Aorta (tissue), 5 donors: ENCODE measurements at regions of chr7 and their contacts with region 1.

Region 1: GRCh38 chr7:21507626-21508343 is 35.1 kb upstream of the DNAH11 start:
- DNase-seq: no peak
- ATAC-seq: no peak
- H3K4me3 ChIP-seq: no peak overlapping the region
- H3K27ac ChIP-seq: no peak overlapping the region
- H3K4me1 ChIP-seq: no peaks in the 10 kb centered on the region
- H3K27me3 ChIP-seq: no peaks in the 10 kb centered on the region

Region 2: GRCh38 chr7:20778063-20778721 is 729.6 kb before region 1 on chr7:
- intact Hi-C with region 1: loop called in 1 of 2 experiments (anchors 10 kb)
- DNase-seq: peak; percentile 48 to 72
- ATAC-seq: peak; percentile 52
- H3K4me3 ChIP-seq: no peak overlapping the region
- H3K27ac ChIP-seq: no peak overlapping the region
- H3K4me1 ChIP-seq: no peaks in the 10 kb centered on the region
- H3K27me3 ChIP-seq: peaks cover 0 to 3% of the 10 kb centered on the region in 2 donors

Region 3: DNA sequence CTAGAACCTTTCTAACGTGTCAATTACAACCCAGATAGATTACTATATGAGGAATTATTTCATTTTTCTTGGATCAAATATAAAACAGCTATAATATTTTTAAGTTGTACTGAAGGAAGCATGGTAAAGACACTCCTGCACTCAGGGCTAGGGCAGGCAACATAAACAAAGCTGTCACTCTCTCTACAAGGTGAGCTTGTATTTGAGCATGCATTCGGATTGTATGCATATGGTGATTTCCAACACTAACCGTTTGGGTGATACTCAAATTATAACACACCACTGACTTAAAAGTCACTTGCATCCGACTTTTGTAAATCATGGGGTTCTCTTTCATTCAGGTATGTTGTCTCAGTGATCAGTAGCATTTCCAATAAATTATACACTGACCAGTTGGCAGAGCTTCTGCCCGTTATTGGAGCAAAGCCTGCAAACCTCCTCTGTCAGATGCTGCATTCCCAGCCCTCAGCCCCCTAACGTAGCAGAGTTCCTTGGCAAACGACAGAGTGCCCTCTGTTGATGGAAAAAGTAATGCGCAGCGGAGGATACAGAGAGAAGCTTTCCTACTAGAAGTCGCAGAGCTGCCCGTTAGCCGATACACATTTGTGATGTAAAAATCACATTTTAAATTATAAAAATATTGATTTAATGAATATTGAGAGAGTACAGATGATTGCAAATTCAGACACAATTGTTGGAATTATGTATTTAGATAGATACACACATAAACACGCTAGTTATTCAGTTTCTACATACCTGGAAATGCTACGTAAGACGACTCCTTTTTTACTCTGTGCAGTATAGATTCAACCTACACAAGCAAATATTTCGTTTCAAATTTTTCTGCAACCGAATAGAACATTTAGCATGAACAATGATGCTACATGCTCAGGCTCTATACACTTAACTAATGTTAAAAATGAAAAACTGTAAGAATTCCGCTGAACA is 253.8 kb before region 1 on chr7:
- intact Hi-C with region 1: loop called (anchors 10 kb)
- DNase-seq: no peak
- ATAC-seq: no peak
- H3K4me3 ChIP-seq: peak overlapping the region in 1 of 2 donors; percentile 48
- H3K27ac ChIP-seq: no peak overlapping the region
- H3K4me1 ChIP-seq: no peaks in the 10 kb centered on the region
- H3K27me3 ChIP-seq: peaks cover 0 to 2% of the 10 kb centered on the region in 2 donors